H1 (cell line): ENCODE measurements at regions of chr2 and their contacts with region 1.

Region 1: GRCh38 chr2:161946489-161947107 is 127.4 kb downstream of the DPP4 start:
- DNase-seq: no peak
- H3K4me3 ChIP-seq: no peak overlapping the region
- H3K27ac ChIP-seq: no peak overlapping the region
- H3K4me1 ChIP-seq: peaks cover 0 to 4% (median 0%) of the 10 kb centered on the region in 4 experiments; a peak in 1 of 7 replicates
- H3K27me3 ChIP-seq: no peaks in the 10 kb centered on the region
- CTCF ChIP-seq: peak in 2 of 3 experiments; percentile 23 to 31; a peak in 2 of 4 replicates
- EP300 ChIP-seq: no peak
- POLR2A ChIP-seq: no peak
- RAD21 ChIP-seq: peak; percentile 62 to 67

Region 2: DNA sequence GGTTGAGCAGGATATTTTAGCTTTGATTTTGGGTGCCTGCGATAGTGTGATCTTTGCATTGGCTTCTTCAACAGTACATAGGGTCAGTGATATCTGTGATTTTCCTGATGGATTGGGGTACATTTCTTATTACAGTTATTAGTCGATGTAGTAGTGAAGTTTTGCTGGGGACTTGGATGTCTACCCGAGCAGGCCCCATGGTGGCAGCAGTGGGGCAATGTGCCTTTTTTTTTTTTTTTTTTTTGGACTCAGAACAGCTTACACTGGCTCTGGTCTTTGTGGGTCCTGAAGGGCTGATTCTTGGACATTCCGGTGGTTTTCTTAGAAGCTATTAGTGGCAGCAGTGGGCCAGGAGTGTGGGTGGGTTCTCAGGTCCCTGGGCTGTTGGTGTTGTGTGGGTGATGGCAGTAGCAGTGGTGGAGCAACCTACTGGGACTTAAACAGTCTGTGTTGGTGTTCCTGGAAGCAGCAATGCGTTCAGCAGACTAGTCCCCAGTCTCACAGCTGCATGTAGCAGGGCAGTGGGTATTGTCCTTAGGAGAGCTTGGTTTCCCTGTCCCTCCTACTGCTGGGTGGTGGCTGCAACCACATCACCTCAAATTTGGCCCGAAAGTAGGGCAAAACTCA is 376.1 kb before region 1 on chr2:
- CTCF ChIA-PET with region 1: interaction called, 24 read pairs
- POLR2A ChIA-PET with region 1: no interaction called
- DNase-seq: no peak
- H3K4me3 ChIP-seq: no peak overlapping the region
- H3K27ac ChIP-seq: no peak overlapping the region
- H3K4me1 ChIP-seq: no peaks in the 10 kb centered on the region
- H3K27me3 ChIP-seq: no peaks in the 10 kb centered on the region
- CTCF ChIP-seq: peak; percentile 30 to 52 (median 47); a peak in 3 of 4 replicates
- EP300 ChIP-seq: no peak
- POLR2A ChIP-seq: no peak
- RAD21 ChIP-seq: peak; percentile 31 to 44; a peak in 3 of 4 replicates

Region 3: DNA sequence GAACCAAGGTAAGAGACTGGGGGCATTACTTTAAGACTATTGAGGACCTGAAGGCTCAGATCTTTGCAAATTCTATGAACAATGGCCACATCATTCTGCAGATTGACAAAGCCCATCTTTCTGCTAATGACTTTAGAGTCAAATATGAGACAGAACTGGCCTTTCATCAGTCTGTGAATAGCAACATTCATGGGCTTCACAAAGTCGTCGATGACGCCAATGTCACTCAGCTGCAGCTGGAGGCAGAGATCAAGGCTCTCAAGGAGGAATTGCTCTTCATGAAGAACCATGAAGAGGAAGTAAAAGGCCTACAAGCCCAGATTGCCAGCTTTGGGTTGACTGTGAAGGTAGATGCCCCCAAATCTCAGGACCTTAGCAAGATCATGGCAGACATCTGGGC is 366.2 kb before region 1 on chr2:
- CTCF ChIA-PET with region 1: interaction called, 11 read pairs
- POLR2A ChIA-PET with region 1: no interaction called
- DNase-seq: no peak
- H3K4me3 ChIP-seq: no peak overlapping the region
- H3K27ac ChIP-seq: no peak overlapping the region
- H3K4me1 ChIP-seq: no peaks in the 10 kb centered on the region
- H3K27me3 ChIP-seq: no peaks in the 10 kb centered on the region
- CTCF ChIP-seq: no peak
- EP300 ChIP-seq: no peak
- POLR2A ChIP-seq: no peak
- RAD21 ChIP-seq: no peak

Region 4: GRCh38 chr2:161586517-161587167 is 360.0 kb before region 1 on chr2:
- CTCF ChIA-PET with region 1: interaction called, 137 read pairs
- POLR2A ChIA-PET with region 1: no interaction called
- DNase-seq: no peak
- H3K4me3 ChIP-seq: no peak overlapping the region
- H3K27ac ChIP-seq: no peak overlapping the region
- H3K4me1 ChIP-seq: no peaks in the 10 kb centered on the region
- H3K27me3 ChIP-seq: no peaks in the 10 kb centered on the region
- CTCF ChIP-seq: peak in 2 of 3 experiments; percentile 47 to 68; a peak in 2 of 4 replicates
- EP300 ChIP-seq: no peak
- POLR2A ChIP-seq: no peak
- RAD21 ChIP-seq: peak; percentile 85 to 88

Region 5: GRCh38 chr2:161592713-161593112 is 353.9 kb before region 1 on chr2:
- CTCF ChIA-PET with region 1: interaction called, 137 read pairs
- POLR2A ChIA-PET with region 1: no interaction called
- DNase-seq: no peak
- H3K4me3 ChIP-seq: no peak overlapping the region
- H3K27ac ChIP-seq: no peak overlapping the region
- H3K4me1 ChIP-seq: no peaks in the 10 kb centered on the region
- H3K27me3 ChIP-seq: no peaks in the 10 kb centered on the region; a peak in 1 of 7 replicates
- CTCF ChIP-seq: no peak
- EP300 ChIP-seq: no peak
- POLR2A ChIP-seq: no peak
- RAD21 ChIP-seq: no peak

Region 6: DNA sequence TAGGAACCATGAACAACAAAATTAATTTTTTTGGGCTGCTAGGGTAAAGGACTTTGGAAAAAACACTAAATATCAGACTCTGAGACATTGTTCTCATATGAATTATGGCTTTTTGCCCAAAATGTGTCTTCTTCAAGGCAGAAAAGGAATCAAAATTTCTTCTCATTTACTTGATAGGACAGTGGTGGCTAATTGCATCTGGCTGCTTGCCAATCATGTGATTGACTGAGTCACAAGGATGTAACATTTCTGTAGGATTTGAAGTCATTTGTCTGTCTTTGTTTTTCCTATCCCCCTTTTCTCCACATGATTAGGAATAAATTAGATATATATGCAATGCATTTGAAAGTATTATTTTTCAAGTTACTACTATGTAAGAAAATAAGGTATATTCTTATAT is 192.2 kb before region 1 on chr2:
- CTCF ChIA-PET with region 1: no interaction called
- POLR2A ChIA-PET with region 1: no interaction called
- DNase-seq: no peak
- H3K4me3 ChIP-seq: no peak overlapping the region
- H3K27ac ChIP-seq: no peak overlapping the region
- H3K4me1 ChIP-seq: no peaks in the 10 kb centered on the region
- H3K27me3 ChIP-seq: no peaks in the 10 kb centered on the region
- CTCF ChIP-seq: no peak
- EP300 ChIP-seq: no peak
- POLR2A ChIP-seq: no peak
- RAD21 ChIP-seq: no peak